Pancreas (tissue), 10 donors: ENCODE measurements at regions of chr4 and their contacts with region 1.

Region 1: DNA sequence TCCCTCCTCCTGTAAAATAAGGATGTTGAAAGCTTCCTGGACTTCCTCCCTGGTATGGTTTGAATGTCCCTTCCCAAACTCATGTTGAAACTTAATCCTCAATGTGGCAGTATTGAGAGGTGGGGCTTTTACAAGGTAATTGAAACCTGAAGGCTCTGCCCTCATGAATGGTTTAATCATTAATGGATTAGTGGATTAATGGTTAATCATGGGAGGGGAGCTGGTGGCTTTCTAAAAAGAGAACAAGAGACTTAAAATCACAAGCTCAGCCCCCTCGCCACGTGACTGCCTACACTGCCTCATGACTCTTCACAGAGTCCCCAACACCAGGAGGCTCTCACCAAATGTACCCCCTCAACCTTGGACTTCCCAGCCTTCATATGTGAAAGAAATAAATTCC is 124.6 kb upstream of the ANXA3 start:
- DNase-seq: peak in 2 of 6 donors; percentile 15 to 21
- ATAC-seq: peak; percentile 66 to 91 (median 80)
- H3K4me3 ChIP-seq: no peak overlapping the region
- H3K27ac ChIP-seq: no peak overlapping the region
- H3K4me1 ChIP-seq: peaks cover 4 to 6% (median 6%) of the 10 kb centered on the region in 3 donors
- H3K27me3 ChIP-seq: no peaks in the 10 kb centered on the region
- CTCF ChIP-seq: no peak

Region 2: GRCh38 chr4:78369679-78370078 is 57.3 kb before region 1 on chr4:
- intact Hi-C with region 1: loop called in 1 of 3 experiments (anchors 10 kb)
- DNase-seq: no peak
- ATAC-seq: peak in 3 of 4 donors; percentile 57 to 80 (median 69)
- H3K4me3 ChIP-seq: no peak overlapping the region
- H3K27ac ChIP-seq: peak overlapping the region in 2 of 4 donors; percentile 12 to 23
- H3K4me1 ChIP-seq: peaks cover 0 to 7% (median 3%) of the 10 kb centered on the region in 3 donors
- H3K27me3 ChIP-seq: no peaks in the 10 kb centered on the region
- CTCF ChIP-seq: no peak

Region 3: GRCh38 chr4:78951862-78952472 is 525.0 kb after region 1 on chr4:
- intact Hi-C with region 1: no loop called
- DNase-seq: peak in 1 of 6 donors; percentile 28
- ATAC-seq: peak in 3 of 4 donors; percentile 84 to 92 (median 88)
- H3K4me3 ChIP-seq: no peak overlapping the region
- H3K27ac ChIP-seq: no peak overlapping the region
- H3K4me1 ChIP-seq: no peaks in the 10 kb centered on the region
- H3K27me3 ChIP-seq: no peaks in the 10 kb centered on the region
- CTCF ChIP-seq: peak; percentile 12 to 60 (median 52)